B cell (primary cell): ENCODE measurements at regions of chr6 and their contacts with region 1.

Region 1: DNA sequence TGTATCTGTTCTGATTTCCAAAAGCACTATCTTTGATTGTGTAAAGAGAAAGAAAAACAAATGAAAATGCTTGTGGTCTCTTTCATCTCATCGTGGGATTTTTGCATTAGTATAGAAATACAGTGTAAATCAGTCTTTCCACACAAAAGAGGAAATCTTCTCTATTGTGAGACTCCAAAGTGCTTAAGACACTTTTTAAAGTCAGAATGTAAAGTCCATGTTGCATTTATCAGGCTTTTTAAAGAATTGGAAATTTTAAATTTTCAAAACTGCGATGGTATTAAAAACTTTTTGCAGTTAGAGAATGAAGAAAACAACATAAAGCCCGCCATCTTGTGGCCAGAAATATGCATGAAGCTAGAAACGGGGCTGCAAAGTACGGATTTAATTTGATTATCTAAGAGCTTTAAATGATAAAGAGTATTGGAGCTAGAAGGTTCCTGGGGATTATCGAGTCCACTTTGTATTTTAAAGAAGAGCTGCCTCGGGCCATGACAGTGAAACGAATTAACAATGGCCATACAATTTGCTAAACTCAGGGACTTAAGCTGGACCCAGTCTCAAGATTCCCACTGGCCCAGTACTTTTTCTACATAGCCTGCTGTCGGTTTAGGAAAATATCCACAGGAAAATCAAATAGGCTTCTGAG is 339.6 kb downstream of the ARHGAP18 start:
- DNase-seq: peak; percentile 39
- ATAC-seq: no peak
- H3K4me3 ChIP-seq: no peak overlapping the region
- H3K4me3 Mint-ChIP-seq: no peak overlapping the region
- H3K27ac ChIP-seq: no peak overlapping the region
- H3K27ac Mint-ChIP-seq: no peak overlapping the region
- H3K4me1 ChIP-seq: no peaks in the 10 kb centered on the region
- H3K4me1 Mint-ChIP-seq: no peaks in the 10 kb centered on the region
- H3K27me3 ChIP-seq: no peaks in the 10 kb centered on the region
- H3K27me3 Mint-ChIP-seq: peaks cover 10% of the 10 kb centered on the region
- CTCF ChIP-seq: peak; percentile 83

Region 2: DNA sequence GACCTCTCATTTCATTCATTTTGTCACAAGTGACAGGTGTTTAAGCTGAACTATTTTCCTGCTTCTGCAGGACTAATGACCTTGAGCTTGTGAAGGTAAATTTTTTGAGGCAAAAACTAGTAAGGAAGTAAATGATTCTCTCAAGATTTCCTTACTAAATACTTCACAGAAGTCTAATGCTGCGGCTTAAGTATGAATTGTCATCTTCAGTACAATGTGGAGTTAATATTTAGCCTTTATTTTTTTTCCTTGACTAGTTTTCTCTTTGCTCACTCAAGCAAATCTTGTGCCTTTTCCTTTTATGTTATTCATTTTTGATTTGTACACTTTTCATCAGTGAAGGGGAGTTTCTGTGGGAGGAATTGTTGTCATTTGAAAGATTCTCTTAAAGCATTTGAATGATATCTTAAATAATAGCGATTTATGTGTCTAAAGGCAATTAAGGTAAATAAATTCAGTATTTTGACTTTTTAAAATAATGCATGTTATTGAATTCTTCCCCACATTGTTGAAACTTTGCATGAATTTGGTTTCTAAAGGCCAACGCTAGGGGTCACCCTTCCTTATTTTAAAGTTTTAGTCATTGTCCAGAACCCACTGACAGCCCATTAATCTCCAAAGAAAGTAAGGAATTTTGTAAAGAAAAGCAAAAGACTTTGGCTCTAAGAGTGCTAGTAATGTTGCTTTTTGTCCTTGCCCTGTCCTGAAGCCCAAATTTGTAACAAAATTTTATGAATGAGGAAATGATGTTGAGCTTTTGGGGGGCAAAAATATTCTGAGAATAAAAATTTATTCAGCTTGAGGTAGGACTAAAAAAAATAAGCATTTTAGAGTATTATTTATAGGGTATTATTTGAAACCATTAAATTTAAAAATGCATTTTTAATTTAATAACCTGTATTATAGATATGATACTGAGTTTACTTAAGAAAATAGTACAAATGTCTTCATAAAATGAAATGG is 644.8 kb before region 1 on chr6:
- CTCF ChIA-PET with region 1: interaction called, 10 read pairs
- POLR2A ChIA-PET with region 1: no interaction called
- intact Hi-C with region 1: loop called (anchors 1 kb)
- DNase-seq: peak; percentile 8
- ATAC-seq: no peak
- H3K4me3 ChIP-seq: no peak overlapping the region
- H3K4me3 Mint-ChIP-seq: no peak overlapping the region
- H3K27ac ChIP-seq: no peak overlapping the region
- H3K27ac Mint-ChIP-seq: no peak overlapping the region
- H3K4me1 ChIP-seq: no peaks in the 10 kb centered on the region
- H3K4me1 Mint-ChIP-seq: no peaks in the 10 kb centered on the region
- H3K27me3 ChIP-seq: no peaks in the 10 kb centered on the region
- H3K27me3 Mint-ChIP-seq: no peaks in the 10 kb centered on the region
- CTCF ChIP-seq: peak; percentile 65

Region 3: DNA sequence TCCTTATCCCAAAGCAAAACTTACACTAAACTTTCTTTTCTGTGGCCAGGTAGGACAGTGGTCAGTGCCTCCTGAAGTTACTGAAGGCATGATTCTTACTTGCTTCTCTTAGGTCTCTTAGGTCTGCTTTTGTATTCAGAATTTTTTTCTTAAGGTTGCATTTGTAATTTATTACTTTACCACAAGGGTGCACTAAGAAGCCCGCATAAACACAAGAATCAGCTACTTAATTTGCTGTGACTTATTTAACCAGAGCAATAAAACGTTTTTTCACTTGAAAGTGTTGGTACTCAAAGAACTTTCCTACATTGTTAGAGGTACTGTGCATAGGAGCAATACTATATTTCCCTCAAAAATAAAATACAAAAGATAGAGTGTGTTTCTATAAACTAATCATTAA is 562.8 kb before region 1 on chr6:
- CTCF ChIA-PET with region 1: interaction called, 3 read pairs
- POLR2A ChIA-PET with region 1: no interaction called
- intact Hi-C with region 1: loop called (anchors 5 kb)
- DNase-seq: peak; percentile 3
- ATAC-seq: no peak
- H3K4me3 ChIP-seq: no peak overlapping the region
- H3K4me3 Mint-ChIP-seq: no peak overlapping the region
- H3K27ac ChIP-seq: no peak overlapping the region
- H3K27ac Mint-ChIP-seq: no peak overlapping the region
- H3K4me1 ChIP-seq: no peaks in the 10 kb centered on the region
- H3K4me1 Mint-ChIP-seq: no peaks in the 10 kb centered on the region
- H3K27me3 ChIP-seq: no peaks in the 10 kb centered on the region
- H3K27me3 Mint-ChIP-seq: no peaks in the 10 kb centered on the region
- CTCF ChIP-seq: peak; percentile 20

Region 4: GRCh38 chr6:129359811-129360681 is 10.3 kb before region 1 on chr6:
- CTCF ChIA-PET with region 1: interaction called, 10 read pairs
- POLR2A ChIA-PET with region 1: no interaction called
- intact Hi-C with region 1: no loop called
- DNase-seq: no peak
- ATAC-seq: no peak
- H3K4me3 ChIP-seq: no peak overlapping the region
- H3K4me3 Mint-ChIP-seq: no peak overlapping the region
- H3K27ac ChIP-seq: no peak overlapping the region
- H3K27ac Mint-ChIP-seq: no peak overlapping the region
- H3K4me1 ChIP-seq: no peaks in the 10 kb centered on the region
- H3K4me1 Mint-ChIP-seq: no peaks in the 10 kb centered on the region
- H3K27me3 ChIP-seq: no peaks in the 10 kb centered on the region
- H3K27me3 Mint-ChIP-seq: peaks cover 10% of the 10 kb centered on the region
- CTCF ChIP-seq: no peak